ENCODE measurements at regions of chr11 and their contacts with region 1.

Region 1: GRCh38 chr11:75896843-75897419 is 81.9 kb downstream of the UVRAG start:
- DNase-seq: no peak
- H3K4me3 Mint-ChIP-seq: no peak overlapping the region
- H3K27ac Mint-ChIP-seq: no peak overlapping the region
- H3K4me1 Mint-ChIP-seq: peaks cover 19% of the 10 kb centered on the region
- H3K27me3 Mint-ChIP-seq: no peaks in the 10 kb centered on the region

Region 2: DNA sequence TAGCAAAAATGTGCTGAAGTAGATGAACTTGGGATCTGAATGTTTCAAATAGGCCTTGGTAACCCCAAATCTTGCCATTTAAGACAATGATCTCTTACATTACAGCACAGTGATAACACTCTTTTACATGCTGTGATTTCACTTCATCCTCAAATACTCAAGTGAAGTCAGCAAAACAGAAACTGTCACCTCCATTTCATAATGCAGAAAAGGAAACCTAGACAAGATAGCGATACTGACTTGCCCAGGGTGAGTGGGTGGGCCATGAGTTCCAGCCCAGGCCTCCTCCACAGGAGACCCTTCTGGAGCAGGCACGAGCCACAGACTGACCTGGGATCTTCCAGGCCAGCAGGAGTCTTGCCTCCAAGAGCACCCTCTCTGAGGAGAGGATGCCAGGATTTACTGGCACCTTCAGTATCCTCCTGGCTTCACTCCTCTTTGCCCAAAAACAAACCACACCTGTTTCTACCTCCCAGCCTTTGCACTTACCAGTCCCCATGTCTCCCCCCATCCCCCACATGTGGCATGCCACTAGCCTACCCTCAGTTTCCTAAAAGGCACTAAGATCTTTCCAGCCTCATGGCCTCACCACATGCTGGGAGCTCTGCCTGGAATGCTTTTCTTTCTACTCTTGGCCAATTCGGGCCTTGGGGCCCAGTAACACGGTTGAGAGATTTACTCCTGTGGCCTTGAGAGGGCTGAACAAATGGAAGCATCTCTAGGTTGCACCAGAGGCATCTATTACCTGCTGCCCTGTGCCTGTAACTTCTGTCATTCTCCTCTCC is 130.3 kb before region 1 on chr11:
- CTCF ChIA-PET with region 1: no interaction called
- POLR2A ChIA-PET with region 1: no interaction called
- intact Hi-C with region 1: no loop called
- DNase-seq: peak; percentile 33
- H3K4me3 Mint-ChIP-seq: no peak overlapping the region
- H3K27ac Mint-ChIP-seq: no peak overlapping the region
- H3K4me1 Mint-ChIP-seq: peaks cover 24% of the 10 kb centered on the region
- H3K27me3 Mint-ChIP-seq: peaks cover 8% of the 10 kb centered on the region

Region 3: DNA sequence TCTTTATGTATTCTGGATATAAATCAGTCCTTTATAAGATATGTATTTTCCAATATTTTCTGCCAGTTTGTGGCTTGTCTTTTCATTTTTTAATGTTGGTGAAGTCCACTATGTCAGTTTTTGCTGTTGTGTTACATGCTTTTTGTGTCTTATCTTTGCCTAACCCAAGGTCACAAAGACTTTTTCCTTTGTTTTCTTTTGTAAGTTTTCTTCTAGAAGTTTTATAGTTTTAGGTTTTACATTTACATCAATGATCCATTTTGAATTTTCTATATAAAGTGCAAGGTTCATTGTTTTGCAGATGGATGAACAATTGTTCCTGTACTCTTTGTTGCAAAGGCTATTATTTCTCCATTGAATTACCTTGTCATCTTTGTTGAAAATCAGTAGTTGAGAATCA is 12.6 kb before region 1 on chr11:
- CTCF ChIA-PET with region 1: no interaction called
- POLR2A ChIA-PET with region 1: no interaction called
- intact Hi-C with region 1: no loop called
- DNase-seq: no peak
- H3K4me3 Mint-ChIP-seq: no peak overlapping the region
- H3K27ac Mint-ChIP-seq: no peak overlapping the region
- H3K4me1 Mint-ChIP-seq: no peaks in the 10 kb centered on the region
- H3K27me3 Mint-ChIP-seq: no peaks in the 10 kb centered on the region

Region 4: DNA sequence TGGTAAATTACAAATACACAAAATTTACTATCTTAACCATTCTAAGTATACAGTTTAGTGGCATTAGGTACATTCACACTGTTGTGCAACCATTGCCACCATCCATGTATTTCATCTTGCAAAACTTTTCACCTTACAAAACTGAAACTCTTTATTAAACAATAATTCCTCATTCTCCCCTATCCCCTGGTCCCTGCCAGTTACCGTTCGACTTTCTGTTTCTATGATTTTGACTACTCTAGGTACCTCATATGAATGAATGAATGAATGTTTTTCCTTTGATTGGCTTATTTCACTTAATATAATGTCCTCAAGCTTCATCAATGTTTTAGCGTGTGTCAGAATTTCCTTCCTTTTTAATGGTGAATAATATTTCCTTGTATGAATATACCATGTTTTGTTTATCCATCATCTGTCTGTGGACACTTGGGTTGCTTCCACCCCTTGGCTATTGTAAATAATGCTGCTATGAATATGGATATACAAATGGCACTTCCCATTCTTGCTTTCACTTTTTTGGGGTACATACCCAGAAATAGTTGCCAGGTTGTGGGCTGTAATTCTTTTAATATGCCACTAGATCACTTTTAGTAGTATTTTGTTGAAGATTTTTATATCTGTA is 11.1 kb after region 1 on chr11:
- CTCF ChIA-PET with region 1: interaction called, 4 read pairs
- POLR2A ChIA-PET with region 1: no interaction called
- intact Hi-C with region 1: loop called (anchors 1 kb)
- DNase-seq: no peak
- H3K4me3 Mint-ChIP-seq: no peak overlapping the region
- H3K27ac Mint-ChIP-seq: no peak overlapping the region
- H3K4me1 Mint-ChIP-seq: peaks cover 28% of the 10 kb centered on the region
- H3K27me3 Mint-ChIP-seq: no peaks in the 10 kb centered on the region

Region 5: DNA sequence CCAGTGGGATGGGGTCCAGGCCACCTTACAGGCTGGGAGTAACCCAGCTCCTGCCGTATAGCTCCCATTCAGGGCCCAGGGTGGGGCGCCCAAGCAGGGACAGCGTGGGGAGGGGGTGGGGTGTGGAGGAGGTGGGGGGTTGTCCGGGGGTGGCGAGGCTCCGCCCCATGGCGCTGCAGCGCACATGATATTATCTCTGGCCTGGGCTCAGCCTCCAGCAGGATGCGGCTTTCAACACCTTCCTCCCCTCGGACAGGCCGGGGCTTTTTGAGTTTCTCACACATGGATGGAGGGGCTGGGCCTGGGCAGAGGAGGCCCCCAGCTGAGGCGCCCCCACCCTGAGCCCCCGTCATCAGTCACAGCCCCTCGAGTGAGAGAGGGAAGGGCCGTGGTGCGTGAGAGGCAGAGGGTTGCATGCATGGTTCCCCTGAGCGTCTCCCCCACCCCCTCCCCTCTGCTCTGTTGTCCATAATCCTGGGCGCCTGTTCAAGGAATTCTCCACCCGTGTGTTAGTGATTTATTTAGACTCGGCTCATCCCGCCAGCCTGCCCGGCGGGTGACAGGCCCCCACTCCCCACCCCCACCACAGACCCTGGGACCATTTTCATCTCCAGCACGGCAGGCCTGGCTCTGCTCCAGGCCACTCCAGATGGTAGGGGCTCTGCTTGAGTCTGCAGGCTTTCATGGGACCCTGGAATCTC is 264.5 kb after region 1 on chr11:
- CTCF ChIA-PET with region 1: interaction called, 10 read pairs
- POLR2A ChIA-PET with region 1: no interaction called
- intact Hi-C with region 1: no loop called
- DNase-seq: no peak
- H3K4me3 Mint-ChIP-seq: no peak overlapping the region
- H3K27ac Mint-ChIP-seq: no peak overlapping the region
- H3K4me1 Mint-ChIP-seq: peaks cover 3% of the 10 kb centered on the region
- H3K27me3 Mint-ChIP-seq: peaks cover 2% of the 10 kb centered on the region

Region 6: DNA sequence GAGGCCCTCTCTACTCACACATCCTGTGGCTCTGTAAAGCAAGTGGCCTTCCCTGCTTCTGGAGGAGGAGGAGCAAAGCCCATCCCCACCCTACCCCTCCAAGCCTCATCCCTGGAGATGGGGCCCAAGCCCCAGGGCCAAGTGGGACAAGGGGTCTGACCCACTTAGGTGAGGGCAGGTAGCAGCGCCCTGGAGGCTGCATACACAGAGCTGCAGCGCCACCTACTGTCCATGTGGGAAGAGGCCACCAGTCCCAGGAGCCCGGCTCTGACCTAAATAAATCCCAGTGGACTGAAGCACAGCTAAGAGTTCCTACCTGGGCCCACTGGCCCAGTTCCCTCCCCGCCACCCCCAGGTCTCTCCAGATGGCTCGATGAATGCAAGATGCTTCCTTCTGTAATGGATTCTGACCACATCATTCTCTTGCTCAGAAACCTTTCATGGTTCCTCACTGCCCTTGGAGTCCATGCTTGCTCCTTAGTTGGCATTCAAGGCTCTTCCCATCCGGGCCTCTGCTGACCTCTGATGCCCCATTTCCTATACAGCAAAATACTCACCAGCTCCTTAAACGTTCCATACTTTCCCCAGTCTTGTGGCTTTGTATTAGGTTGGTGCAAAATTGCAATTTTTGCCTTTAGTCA is 421.9 kb after region 1 on chr11:
- CTCF ChIA-PET with region 1: interaction called, 21 read pairs
- POLR2A ChIA-PET with region 1: no interaction called
- intact Hi-C with region 1: loop called (anchors 2 kb)
- DNase-seq: peak; percentile 88
- H3K4me3 Mint-ChIP-seq: no peak overlapping the region
- H3K27ac Mint-ChIP-seq: no peak overlapping the region
- H3K4me1 Mint-ChIP-seq: peaks cover 15% of the 10 kb centered on the region
- H3K27me3 Mint-ChIP-seq: peaks cover 26% of the 10 kb centered on the region